ENCODE measurements at regions of chr17 and their contacts with region 1.

Region 1: DNA sequence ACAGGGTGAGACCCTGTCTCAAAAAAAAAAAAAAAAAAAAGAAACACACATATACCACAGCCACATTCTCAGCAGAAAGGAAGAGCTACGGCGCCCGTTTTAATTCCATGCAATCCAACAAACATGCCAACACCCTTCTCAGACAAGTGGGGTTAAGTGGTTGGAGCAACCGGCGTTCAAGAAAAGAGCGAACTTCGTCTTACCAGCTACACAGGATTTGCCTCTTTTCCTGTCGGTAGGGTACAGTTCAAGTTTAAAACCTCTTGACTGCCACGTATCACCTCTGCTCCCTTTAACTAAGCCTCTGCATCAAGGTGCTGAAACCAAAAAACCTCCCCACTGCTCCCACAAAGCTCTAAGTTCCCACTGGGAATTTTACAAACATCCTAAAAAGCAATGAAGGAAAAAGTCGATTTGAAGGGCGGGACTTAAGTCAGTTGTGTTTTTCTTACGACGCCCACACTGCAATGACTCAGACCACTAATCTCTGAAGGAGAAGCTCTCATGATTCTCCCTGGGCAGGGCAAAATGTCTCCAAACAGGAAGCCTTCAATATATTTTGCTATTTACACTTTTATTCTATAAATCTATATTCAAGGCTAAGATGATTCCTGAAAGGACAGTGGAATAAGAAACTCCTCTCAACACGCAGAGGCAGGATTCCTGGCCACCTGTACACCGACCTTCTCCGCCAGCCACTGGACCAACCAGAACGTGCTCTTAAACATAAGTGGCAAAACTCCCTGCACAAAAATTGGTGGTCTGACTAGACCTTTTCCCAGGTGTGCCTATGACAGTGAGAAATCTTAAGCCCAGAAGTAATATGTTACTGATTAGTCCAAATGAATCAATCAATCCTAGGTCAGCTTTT is 18.8 kb downstream of the SRP68 start:
- DNase-seq: peak in 2 of 4 experiments; percentile 57 to 62
- ATAC-seq: peak; percentile 82
- H3K4me3 ChIP-seq: no peak overlapping the region
- H3K27ac ChIP-seq: peak overlapping the region; percentile 71
- H3K4me1 ChIP-seq: peaks cover 5 to 9% of the 10 kb centered on the region in 2 experiments; a peak in 3 of 5 replicates
- H3K27me3 ChIP-seq: no peaks in the 10 kb centered on the region
- CTCF ChIP-seq: no peak
- EP300 ChIP-seq: no peak
- POLR2A ChIP-seq: no peak
- RAD21 ChIP-seq: no peak

Region 2: DNA sequence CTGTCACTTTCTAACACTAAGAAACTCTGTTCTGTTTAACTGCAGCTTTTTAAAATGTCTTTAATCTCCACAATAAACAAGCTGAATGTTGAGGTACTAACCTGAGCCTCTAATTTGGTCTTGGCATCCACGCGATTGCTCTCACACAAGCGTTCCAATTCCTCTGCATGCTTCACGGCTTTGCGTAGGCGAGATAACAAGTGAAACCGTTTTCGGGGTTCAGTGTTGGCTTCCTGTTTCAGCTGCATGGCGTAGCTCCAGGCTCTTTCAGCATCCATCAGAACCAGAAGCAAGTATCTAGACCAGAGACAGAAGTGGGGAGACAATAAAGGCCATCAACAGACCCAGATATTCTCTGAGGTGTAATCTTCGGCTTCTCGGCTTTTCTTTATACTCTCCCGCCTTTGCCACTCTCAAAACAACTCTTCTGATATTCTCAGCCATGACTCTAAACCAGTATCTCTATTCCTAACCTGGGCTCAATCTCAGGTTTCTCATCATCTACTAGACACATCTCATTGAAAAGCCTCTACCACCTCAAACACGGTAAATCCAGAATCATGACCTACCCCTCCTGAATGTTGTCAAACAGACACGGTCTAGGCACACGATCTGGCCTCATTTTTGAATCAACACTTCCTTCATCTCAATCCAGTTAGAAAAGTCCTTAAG is 10.5 kb after region 1 on chr17:
- CTCF ChIA-PET with region 1: no interaction called
- POLR2A ChIA-PET with region 1: interaction called, 14 read pairs
- in situ Hi-C with region 1: no loop called
- intact Hi-C with region 1: no loop called
- DNase-seq: no peak
- ATAC-seq: no peak
- H3K4me3 ChIP-seq: no peak overlapping the region
- H3K27ac ChIP-seq: no peak overlapping the region
- H3K4me1 ChIP-seq: no peaks in the 10 kb centered on the region
- H3K27me3 ChIP-seq: no peaks in the 10 kb centered on the region
- CTCF ChIP-seq: no peak
- EP300 ChIP-seq: no peak
- POLR2A ChIP-seq: no peak
- RAD21 ChIP-seq: no peak

Region 3: GRCh38 chr17:76072148-76072858 is 18.8 kb after region 1 on chr17 and contains the start of gene SRP68:
- CTCF ChIA-PET with region 1: no interaction called
- POLR2A ChIA-PET with region 1: interaction called, 33 read pairs
- in situ Hi-C with region 1: no loop called
- intact Hi-C with region 1: no loop called
- DNase-seq: peak; percentile 92 to 95 (median 95)
- ATAC-seq: peak; percentile 99
- H3K4me3 ChIP-seq: peak within 1 kb of the TSS; percentile 79
- H3K27ac ChIP-seq: peak within 1 kb of the TSS; percentile 80
- H3K4me1 ChIP-seq: peaks cover 5 to 45% of the 10 kb centered on the region in 2 experiments
- H3K27me3 ChIP-seq: peaks cover 12 to 26% of the 10 kb centered on the region in 2 experiments; a peak in 3 of 5 replicates
- CTCF ChIP-seq: no peak
- EP300 ChIP-seq: no peak
- POLR2A ChIP-seq: peak; percentile 96
- RAD21 ChIP-seq: no peak; a peak in 1 of 4 replicates
- polyA plus RNA-seq, gene SRP68: 29.4 to 31.4 TPM

Region 4: GRCh38 chr17:76188213-76189015 is 134.9 kb after region 1 on chr17:
- CTCF ChIA-PET with region 1: no interaction called
- POLR2A ChIA-PET with region 1: no interaction called
- in situ Hi-C with region 1: no loop called
- intact Hi-C with region 1: no loop called
- DNase-seq: no peak
- ATAC-seq: peak; percentile 54
- H3K4me3 ChIP-seq: no peak overlapping the region
- H3K27ac ChIP-seq: no peak overlapping the region; the same call in 1 of the 3 replicates
- H3K4me1 ChIP-seq: peaks cover 24 to 33% of the 10 kb centered on the region in 2 experiments
- H3K27me3 ChIP-seq: no peaks in the 10 kb centered on the region
- CTCF ChIP-seq: peak in 1 of 3 experiments; percentile 26; a peak in 1 of 6 replicates
- EP300 ChIP-seq: no peak
- POLR2A ChIP-seq: no peak
- RAD21 ChIP-seq: no peak

Measured in K562 (cell line).